Naive thymus-derived CD4-positive, alpha-beta T cell (primary cell): ENCODE measurements at regions of chr10 and their contacts with region 1.

Region 1: DNA sequence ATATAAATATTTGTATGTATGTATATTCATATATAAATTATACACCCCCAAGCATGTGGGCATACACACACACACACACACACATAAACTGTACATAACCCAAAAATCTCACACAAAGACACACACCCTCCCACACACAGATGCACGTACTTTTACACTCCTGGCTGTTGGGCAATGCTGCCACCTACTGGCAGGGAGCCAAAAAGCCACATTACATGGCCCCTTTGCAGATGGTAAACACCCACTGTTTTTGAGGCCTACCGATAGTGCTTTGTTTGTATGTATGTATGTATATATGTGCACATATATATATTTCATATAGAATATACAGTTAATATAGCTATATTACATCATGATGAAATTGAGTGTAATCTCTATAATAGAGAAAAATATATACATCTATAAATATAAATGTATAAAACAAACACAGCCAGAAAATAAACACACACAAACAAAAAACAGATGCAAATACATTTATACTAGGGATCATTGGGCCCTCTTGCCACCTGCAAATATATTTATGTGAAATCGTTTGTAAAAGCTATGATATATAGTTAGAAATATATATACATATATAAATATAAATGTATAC is 120.1 kb upstream of the ACBD5 start:
- DNase-seq: peak; percentile 67 to 85 (median 81)
- ATAC-seq: peak; percentile 97
- H3K4me3 ChIP-seq: no peak overlapping the region
- H3K4me3 Mint-ChIP-seq: no peak overlapping the region
- H3K27ac ChIP-seq: no peak overlapping the region
- H3K27ac Mint-ChIP-seq: no peak overlapping the region
- H3K4me1 ChIP-seq: no peaks in the 10 kb centered on the region
- H3K4me1 Mint-ChIP-seq: no peaks in the 10 kb centered on the region
- H3K27me3 ChIP-seq: no peaks in the 10 kb centered on the region
- H3K27me3 Mint-ChIP-seq: no peaks in the 10 kb centered on the region

Region 2: GRCh38 chr10:26890956-26891355 is 469.7 kb before region 1 on chr10:
- CTCF ChIA-PET with region 1: no interaction called
- POLR2A ChIA-PET with region 1: no interaction called
- intact Hi-C with region 1: loop called in 1 of 2 experiments (anchors 1 kb)
- DNase-seq: peak in 7 of 9 donors; percentile 10 to 45 (median 27)
- ATAC-seq: peak; percentile 51
- H3K4me3 ChIP-seq: no peak overlapping the region
- H3K4me3 Mint-ChIP-seq: no peak overlapping the region
- H3K27ac ChIP-seq: no peak overlapping the region
- H3K27ac Mint-ChIP-seq: peak overlapping the region in 1 of 9 donors; percentile 48
- H3K4me1 ChIP-seq: no peaks in the 10 kb centered on the region
- H3K4me1 Mint-ChIP-seq: no peaks in the 10 kb centered on the region
- H3K27me3 ChIP-seq: no peaks in the 10 kb centered on the region
- H3K27me3 Mint-ChIP-seq: peaks cover 0 to 9% (median 7%) of the 10 kb centered on the region in 5 donors

Region 3: DNA sequence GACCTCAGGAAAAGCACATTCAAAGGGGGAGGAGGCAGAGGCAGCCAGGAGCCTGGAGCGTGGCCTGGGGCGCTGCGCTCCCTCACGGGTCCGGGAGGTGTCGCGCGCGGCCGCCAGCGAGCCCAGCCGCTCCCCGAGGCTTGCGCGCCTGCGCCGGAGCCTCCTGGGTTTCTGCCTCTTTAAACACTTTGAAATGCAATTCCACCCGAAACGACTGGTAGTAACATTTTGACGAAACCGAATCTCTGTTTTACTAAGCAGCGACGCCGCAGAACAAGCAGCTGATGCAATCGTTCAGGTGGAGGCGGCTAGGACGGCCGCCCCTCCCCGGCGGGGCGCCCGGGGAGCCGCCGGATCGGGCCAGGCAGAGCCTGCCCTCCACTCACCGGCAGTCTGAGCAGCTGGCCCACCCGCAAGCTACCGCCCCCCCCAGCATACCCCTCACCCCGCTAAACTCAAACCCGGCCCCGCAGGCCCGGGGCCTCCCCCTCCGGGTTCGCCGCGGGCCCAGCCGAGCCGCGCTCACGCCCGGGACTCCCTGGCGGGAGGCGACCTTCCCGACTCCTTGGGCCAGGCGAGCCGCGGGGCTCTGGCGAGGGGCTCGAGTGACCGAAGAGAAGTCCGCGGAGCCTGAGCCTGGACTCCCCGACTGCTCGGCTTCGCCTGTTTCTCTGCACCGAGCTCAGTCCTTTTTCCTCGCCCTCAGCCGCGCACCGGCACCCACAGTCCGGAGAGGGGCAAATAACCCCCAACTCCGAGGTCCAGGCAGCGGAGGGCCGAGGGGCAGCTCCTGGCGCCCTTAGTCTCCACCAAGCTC is 381.7 kb after region 1 on chr10:
- CTCF ChIA-PET with region 1: no interaction called
- POLR2A ChIA-PET with region 1: no interaction called
- intact Hi-C with region 1: no loop called
- DNase-seq: peak; percentile 58 to 82 (median 77)
- ATAC-seq: peak; percentile 87
- H3K4me3 ChIP-seq: peak overlapping the region; percentile 73
- H3K4me3 Mint-ChIP-seq: peak overlapping the region; percentile 70 to 96 (median 86)
- H3K27ac ChIP-seq: no peak overlapping the region
- H3K27ac Mint-ChIP-seq: peak overlapping the region in 1 of 9 donors; percentile 20
- H3K4me1 ChIP-seq: peaks cover 27 to 42% of the 10 kb centered on the region in 2 donors
- H3K4me1 Mint-ChIP-seq: peaks cover 23 to 44% (median 29%) of the 10 kb centered on the region in 7 donors
- H3K27me3 ChIP-seq: peaks cover 16 to 55% of the 10 kb centered on the region in 2 donors
- H3K27me3 Mint-ChIP-seq: peaks cover 51 to 82% (median 65%) of the 10 kb centered on the region in 5 donors